ENCODE measurements at regions of chr13 and their contacts with region 1.

Region 1: GRCh38 chr13:36420437-36420891 is 11.8 kb upstream of the CCNA1 start:
- DNase-seq: peak; percentile 85
- H3K4me3 Mint-ChIP-seq: no peak overlapping the region
- H3K27ac Mint-ChIP-seq: peak overlapping the region; percentile 33
- H3K4me1 Mint-ChIP-seq: peaks cover 21% of the 10 kb centered on the region
- H3K27me3 Mint-ChIP-seq: no peaks in the 10 kb centered on the region
- CTCF ChIP-seq: peak; percentile 77

Region 2: DNA sequence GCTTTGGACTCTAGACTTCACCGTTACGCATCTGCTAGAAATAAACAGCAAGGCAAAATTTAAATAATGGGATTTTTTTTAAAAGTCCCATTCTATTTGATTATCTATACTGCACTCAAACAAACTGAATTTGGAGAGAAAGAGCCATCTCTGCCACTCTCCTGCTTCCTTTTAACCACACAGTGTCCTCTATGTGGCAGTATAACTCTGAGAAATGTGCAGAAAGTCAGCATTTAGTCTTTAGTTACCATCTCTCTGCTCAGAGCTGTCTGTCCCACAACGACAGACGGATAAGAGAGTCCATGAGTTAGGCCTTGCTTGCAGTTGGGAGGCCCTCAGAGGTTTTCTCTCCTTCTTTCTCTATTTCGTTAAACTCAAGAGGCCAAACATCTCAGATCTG is 33.1 kb after region 1 on chr13:
- CTCF ChIA-PET with region 1: interaction called, 36 read pairs
- POLR2A ChIA-PET with region 1: no interaction called
- intact Hi-C with region 1: no loop called
- DNase-seq: peak; percentile 39
- H3K4me3 Mint-ChIP-seq: no peak overlapping the region
- H3K27ac Mint-ChIP-seq: no peak overlapping the region
- H3K4me1 Mint-ChIP-seq: no peaks in the 10 kb centered on the region
- H3K27me3 Mint-ChIP-seq: no peaks in the 10 kb centered on the region
- CTCF ChIP-seq: no peak

Region 3: GRCh38 chr13:36736119-36736726 is 315.8 kb after region 1 on chr13:
- CTCF ChIA-PET with region 1: interaction called, 63 read pairs
- POLR2A ChIA-PET with region 1: interaction called, 4 read pairs
- intact Hi-C with region 1: loop called (anchors 1 kb)
- DNase-seq: peak; percentile 62
- H3K4me3 Mint-ChIP-seq: no peak overlapping the region
- H3K27ac Mint-ChIP-seq: no peak overlapping the region
- H3K4me1 Mint-ChIP-seq: no peaks in the 10 kb centered on the region
- H3K27me3 Mint-ChIP-seq: no peaks in the 10 kb centered on the region
- CTCF ChIP-seq: peak; percentile 69

Region 4: DNA sequence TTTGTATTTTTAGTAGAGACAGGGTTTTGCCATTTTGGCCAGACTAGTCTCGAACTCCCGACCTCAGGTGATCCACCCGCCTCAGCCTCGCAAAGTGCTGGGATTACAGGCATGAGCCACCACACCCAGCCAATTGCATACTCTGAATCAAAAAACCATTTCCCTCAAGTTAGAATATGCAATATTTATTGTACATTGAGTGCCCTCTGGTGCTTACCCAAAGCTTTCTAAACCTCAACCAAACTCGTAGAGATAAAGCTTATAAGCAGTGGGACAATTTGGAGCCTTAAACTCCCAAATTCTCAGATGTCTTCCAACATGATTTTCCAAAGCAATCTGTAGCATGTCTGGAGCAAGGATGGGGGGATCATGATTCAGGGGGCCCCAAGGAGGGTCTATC is 420.9 kb after region 1 on chr13:
- CTCF ChIA-PET with region 1: interaction called, 4 read pairs
- POLR2A ChIA-PET with region 1: no interaction called
- intact Hi-C with region 1: loop called (anchors 1 kb)
- DNase-seq: no peak
- H3K4me3 Mint-ChIP-seq: no peak overlapping the region
- H3K27ac Mint-ChIP-seq: no peak overlapping the region
- H3K4me1 Mint-ChIP-seq: no peaks in the 10 kb centered on the region
- H3K27me3 Mint-ChIP-seq: no peaks in the 10 kb centered on the region
- CTCF ChIP-seq: no peak

Region 5: GRCh38 chr13:37526710-37527473 is 1106.4 kb after region 1 on chr13:
- CTCF ChIA-PET with region 1: no interaction called
- POLR2A ChIA-PET with region 1: no interaction called
- intact Hi-C with region 1: no loop called
- DNase-seq: no peak
- H3K4me3 Mint-ChIP-seq: no peak overlapping the region
- H3K27ac Mint-ChIP-seq: no peak overlapping the region
- H3K4me1 Mint-ChIP-seq: no peaks in the 10 kb centered on the region
- H3K27me3 Mint-ChIP-seq: no peaks in the 10 kb centered on the region
- CTCF ChIP-seq: no peak

Measured in MCF 10A (cell line).